ENCODE measurements at regions of chr11 and their contacts with region 1.

Region 1: GRCh38 chr11:269146-269890 is 8.9 kb upstream of the NLRP6 start:
- H3K4me3 Mint-ChIP-seq: peak overlapping the region; percentile 77
- H3K27ac Mint-ChIP-seq: peak overlapping the region; percentile 99
- H3K4me1 Mint-ChIP-seq: peaks cover 55% of the 10 kb centered on the region
- H3K27me3 Mint-ChIP-seq: peaks cover 10% of the 10 kb centered on the region

Region 2: GRCh38 chr11:207208-207862 is 62.0 kb before region 1 on chr11 and contains the starts of genes BET1L and RIC8A:
- intact Hi-C with region 1: loop called (anchors 2 kb)
- H3K4me3 Mint-ChIP-seq: peak within 1 kb of the TSS; percentile 87
- H3K27ac Mint-ChIP-seq: peak within 1 kb of the TSS; percentile 99
- H3K4me1 Mint-ChIP-seq: peaks cover 72% of the 10 kb centered on the region
- H3K27me3 Mint-ChIP-seq: no peaks in the 10 kb centered on the region

Region 3: DNA sequence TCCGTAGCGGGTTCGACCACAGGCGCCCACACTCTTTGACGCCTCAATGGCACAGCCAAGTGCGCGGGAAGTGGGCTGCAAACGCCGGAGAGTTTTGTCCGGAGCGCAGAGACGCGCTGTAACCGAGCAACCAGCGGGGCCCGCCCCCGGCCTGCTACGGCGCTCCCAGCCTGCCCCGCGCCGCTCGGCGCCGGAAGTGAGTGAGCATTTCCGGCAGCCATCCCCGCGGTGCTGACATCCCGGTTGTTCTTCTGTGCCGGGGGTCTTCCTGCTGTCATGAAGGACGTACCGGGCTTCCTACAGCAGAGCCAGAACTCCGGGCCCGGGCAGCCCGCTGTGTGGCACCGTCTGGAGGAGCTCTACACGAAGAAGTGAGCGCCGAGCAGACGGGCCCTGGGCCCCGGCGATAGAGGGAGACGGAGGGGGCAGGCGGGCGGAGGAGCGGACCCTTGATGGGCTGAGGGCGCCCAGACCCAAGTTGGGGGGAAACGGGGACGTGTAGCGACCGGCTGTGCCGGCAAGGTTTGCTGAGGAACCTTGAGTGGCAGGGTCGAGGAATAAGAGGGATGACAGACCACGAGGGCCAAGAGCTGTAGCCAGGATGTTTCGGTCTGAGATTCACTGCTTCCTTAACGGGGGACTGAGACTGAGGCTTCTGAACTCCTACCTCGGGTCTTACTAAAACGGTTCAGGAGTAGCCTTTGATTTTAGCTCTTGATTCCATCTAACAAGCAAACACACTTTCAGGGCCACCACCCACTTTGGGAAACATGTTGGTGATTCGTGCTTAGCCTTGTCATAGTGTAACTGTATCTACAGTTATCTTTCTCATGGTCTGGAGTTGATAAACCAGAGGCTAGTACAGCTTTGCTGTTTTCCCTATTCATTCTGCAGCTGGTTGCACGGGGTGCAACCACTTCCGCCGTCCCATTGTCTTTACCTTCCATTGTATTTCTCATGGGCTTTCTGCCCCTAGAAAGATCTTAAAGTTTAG is 32.2 kb before region 1 on chr11 and contains the start of gene PSMD13:
- intact Hi-C with region 1: loop called (anchors 1 kb)
- H3K4me3 Mint-ChIP-seq: peak within 1 kb of the TSS; percentile 95
- H3K27ac Mint-ChIP-seq: peak within 1 kb of the TSS; percentile 96
- H3K4me1 Mint-ChIP-seq: peaks cover 27% of the 10 kb centered on the region
- H3K27me3 Mint-ChIP-seq: no peaks in the 10 kb centered on the region

Region 4: DNA sequence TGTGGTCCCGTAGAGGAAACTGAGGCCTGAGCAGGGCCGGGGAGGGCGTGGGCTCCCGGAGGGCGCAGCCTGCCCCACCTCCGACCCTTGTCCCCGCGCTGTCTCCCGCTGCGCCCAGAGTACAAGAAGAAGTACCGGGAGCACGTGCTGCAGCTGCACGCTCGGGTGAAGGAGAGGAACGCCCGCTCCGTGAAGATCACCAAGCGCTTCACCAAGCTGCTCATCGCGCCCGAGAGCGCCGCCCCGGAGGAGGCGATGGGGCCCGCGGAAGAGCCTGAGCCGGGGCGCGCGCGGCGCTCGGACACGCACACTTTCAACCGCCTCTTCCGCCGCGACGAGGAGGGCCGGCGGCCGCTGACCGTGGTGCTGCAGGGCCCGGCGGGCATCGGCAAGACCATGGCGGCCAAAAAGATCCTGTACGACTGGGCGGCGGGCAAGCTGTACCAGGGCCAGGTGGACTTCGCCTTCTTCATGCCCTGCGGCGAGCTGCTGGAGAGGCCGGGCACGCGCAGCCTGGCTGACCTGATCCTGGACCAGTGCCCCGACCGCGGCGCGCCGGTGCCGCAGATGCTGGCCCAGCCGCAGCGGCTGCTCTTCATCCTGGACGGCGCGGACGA is 10.8 kb after region 1 on chr11:
- intact Hi-C with region 1: loop called (anchors 1 kb)
- H3K4me3 Mint-ChIP-seq: peak overlapping the region; percentile 59
- H3K27ac Mint-ChIP-seq: no peak overlapping the region
- H3K4me1 Mint-ChIP-seq: peaks cover 55% of the 10 kb centered on the region
- H3K27me3 Mint-ChIP-seq: peaks cover 87% of the 10 kb centered on the region

Region 5: DNA sequence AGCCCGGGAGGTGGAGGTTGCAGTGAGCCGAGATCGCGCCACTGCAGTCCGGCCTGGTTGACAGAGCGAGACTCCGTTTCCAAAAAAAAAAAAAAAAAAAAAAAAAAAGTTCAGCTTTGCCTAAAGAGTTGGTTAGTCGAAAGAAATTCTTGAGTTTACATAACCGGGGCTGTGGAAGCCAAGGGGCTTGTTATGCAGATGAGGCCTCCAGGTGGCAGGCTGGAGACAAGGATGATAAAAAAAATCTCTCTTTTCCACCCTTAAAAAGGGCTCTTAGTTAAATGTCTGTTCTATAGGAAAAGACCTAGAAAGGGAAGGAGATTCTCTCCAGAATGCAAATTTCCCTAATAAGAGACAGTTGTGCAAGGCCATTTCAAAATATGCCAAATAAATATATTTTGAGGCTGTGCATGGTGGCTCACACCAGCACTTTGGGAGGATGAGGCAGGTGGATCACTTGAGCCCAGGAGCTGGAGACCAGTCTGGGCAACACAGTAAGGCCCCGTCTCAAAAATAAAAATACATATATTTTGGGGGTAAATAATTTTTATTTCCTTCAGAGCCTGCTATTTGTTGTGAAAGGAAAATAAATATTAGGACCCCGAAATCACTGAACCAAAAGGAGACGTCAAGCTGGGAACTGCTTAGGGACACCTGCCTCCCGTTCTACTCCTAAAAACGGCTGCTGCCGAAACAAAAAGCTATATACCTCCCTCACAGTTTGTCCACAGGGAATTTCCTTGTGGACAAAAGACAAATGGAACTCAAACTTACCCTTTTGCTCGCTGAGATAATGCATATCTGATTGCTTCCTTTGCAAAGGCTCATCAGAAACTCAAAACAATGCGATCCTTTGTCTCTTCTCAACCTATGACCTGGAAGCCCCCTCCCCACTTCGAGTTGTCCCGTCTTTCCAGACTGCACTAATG is 35.9 kb after region 1 on chr11:
- intact Hi-C with region 1: loop called (anchors 5 kb)
- H3K4me3 Mint-ChIP-seq: no peak overlapping the region
- H3K27ac Mint-ChIP-seq: no peak overlapping the region
- H3K4me1 Mint-ChIP-seq: peaks cover 39% of the 10 kb centered on the region
- H3K27me3 Mint-ChIP-seq: peaks cover 43% of the 10 kb centered on the region